Prostate gland (tissue), 2 donors: ENCODE measurements at regions of chr19 and their contacts with region 1.

Region 1: GRCh38 chr19:15629003-15629880 is 11.5 kb upstream of the CYP4F3 start:
- DNase-seq: peak; percentile 83
- H3K4me3 ChIP-seq: no peak overlapping the region
- H3K27ac ChIP-seq: no peak overlapping the region
- H3K4me1 ChIP-seq: peaks cover 3% of the 10 kb centered on the region
- H3K27me3 ChIP-seq: no peaks in the 10 kb centered on the region
- CTCF ChIP-seq: peak; percentile 91 to 98 (median 97)
- POLR2A ChIP-seq: no peak

Region 2: GRCh38 chr19:15466851-15467733 is 162.2 kb before region 1 on chr19:
- intact Hi-C with region 1: no loop called
- DNase-seq: no peak
- H3K4me3 ChIP-seq: no peak overlapping the region
- H3K27ac ChIP-seq: no peak overlapping the region
- H3K4me1 ChIP-seq: no peaks in the 10 kb centered on the region
- H3K27me3 ChIP-seq: peaks cover 5% of the 10 kb centered on the region
- CTCF ChIP-seq: no peak
- POLR2A ChIP-seq: no peak

Region 3: GRCh38 chr19:15498911-15499317 is 130.3 kb before region 1 on chr19:
- intact Hi-C with region 1: no loop called
- DNase-seq: no peak
- H3K4me3 ChIP-seq: no peak overlapping the region
- H3K27ac ChIP-seq: peak overlapping the region in 1 of 2 donors; percentile 30
- H3K4me1 ChIP-seq: no peaks in the 10 kb centered on the region
- H3K27me3 ChIP-seq: no peaks in the 10 kb centered on the region
- CTCF ChIP-seq: no peak
- POLR2A ChIP-seq: no peak

Region 4: GRCh38 chr19:15810335-15810734 is 181.1 kb after region 1 on chr19:
- intact Hi-C with region 1: loop called (anchors 2 kb)
- DNase-seq: no peak
- H3K4me3 ChIP-seq: no peak overlapping the region
- H3K27ac ChIP-seq: no peak overlapping the region
- H3K4me1 ChIP-seq: no peaks in the 10 kb centered on the region
- H3K27me3 ChIP-seq: no peaks in the 10 kb centered on the region
- CTCF ChIP-seq: peak in 3 of 4 experiments; percentile 24 to 54 (median 49)
- POLR2A ChIP-seq: no peak

Region 5: DNA sequence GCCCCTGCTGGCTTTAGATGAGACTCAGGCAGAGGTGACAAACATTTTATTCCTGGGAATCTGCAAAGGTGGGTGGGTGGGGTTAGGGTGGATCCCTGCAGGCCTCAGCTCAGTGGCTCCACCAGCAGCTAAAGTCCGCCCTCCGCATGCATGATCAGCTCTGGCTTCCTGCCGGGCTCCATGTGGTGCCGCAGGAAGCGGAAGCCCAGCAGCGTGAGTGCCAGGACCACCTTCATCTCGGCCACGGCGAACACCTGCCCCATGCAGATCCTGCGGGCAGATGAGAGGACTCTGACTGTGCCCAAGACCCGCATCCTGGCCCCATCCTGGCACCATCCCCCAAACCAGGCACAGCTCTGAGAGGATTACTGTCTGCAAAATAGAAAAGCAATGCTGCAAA is 242.3 kb after region 1 on chr19:
- intact Hi-C with region 1: loop called (anchors 5 kb)
- DNase-seq: no peak
- H3K4me3 ChIP-seq: no peak overlapping the region
- H3K27ac ChIP-seq: no peak overlapping the region
- H3K4me1 ChIP-seq: no peaks in the 10 kb centered on the region
- H3K27me3 ChIP-seq: no peaks in the 10 kb centered on the region
- CTCF ChIP-seq: no peak
- POLR2A ChIP-seq: no peak

Region 6: DNA sequence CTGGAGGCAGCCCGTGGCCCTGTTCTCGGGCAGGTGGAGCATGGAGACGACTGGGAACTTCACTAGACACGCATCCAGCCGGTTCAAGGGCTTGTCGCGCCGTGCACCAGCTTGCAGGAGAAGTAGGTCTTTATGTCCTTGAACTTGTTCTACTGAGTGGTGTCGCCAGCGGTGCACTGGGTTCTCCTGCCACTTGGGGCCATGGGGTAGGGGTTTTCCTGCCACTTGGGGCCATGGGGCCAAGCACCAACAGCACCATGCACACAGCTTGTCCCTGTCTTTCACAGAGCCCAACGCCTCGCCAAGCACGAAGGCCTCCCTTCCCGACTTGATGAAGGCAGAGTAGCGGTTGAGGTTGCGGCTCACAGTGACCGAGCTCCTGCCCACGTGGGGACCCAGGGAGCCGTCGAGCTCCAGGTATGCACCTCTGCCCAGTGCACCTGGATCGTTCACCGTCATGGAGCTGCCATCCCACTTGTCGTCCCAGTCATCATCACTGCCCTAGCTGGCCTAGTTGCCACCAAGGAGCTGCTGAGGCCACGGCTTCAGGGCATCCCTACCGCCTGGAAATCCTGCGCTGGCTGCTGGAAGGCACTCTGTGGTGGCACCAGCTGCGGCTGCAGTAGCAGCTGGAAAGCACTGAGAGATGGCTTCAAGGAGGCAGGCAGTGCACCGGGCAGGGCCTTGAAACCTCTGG is 406.5 kb after region 1 on chr19:
- intact Hi-C with region 1: loop called (anchors 10 kb)
- DNase-seq: no peak
- H3K4me3 ChIP-seq: no peak overlapping the region
- H3K27ac ChIP-seq: no peak overlapping the region
- H3K4me1 ChIP-seq: no peaks in the 10 kb centered on the region
- H3K27me3 ChIP-seq: no peaks in the 10 kb centered on the region
- CTCF ChIP-seq: no peak
- POLR2A ChIP-seq: no peak

Region 7: GRCh38 chr19:16185123-16185767 is 556.0 kb after region 1 on chr19 and contains the start of gene FAM32A:
- intact Hi-C with region 1: loop called (anchors 5 kb)
- DNase-seq: peak; percentile 97
- H3K4me3 ChIP-seq: peak within 1 kb of the TSS; percentile 83 to 99
- H3K27ac ChIP-seq: peak within 1 kb of the TSS; percentile 74 to 83
- H3K4me1 ChIP-seq: peaks cover 5% of the 10 kb centered on the region
- H3K27me3 ChIP-seq: no peaks in the 10 kb centered on the region
- CTCF ChIP-seq: peak; percentile 10 to 58 (median 36)
- POLR2A ChIP-seq: peak; percentile 62
- total RNA-seq, gene FAM32A: 98.1 to 103 TPM